Activated CD4-positive, alpha-beta T cell treated with anti-CD3 and anti-CD28 coated beads for 36 hours (primary cell): ENCODE measurements at regions of chr19 and their contacts with region 1.

Region 1: GRCh38 chr19:4342615-4343369 is 570 bp upstream of the MPND start:
- DNase-seq: peak; percentile 97
- ATAC-seq: peak; percentile 91
- H3K4me3 Mint-ChIP-seq: peak overlapping the region; percentile 89
- H3K27ac Mint-ChIP-seq: peak overlapping the region; percentile 93
- H3K4me1 Mint-ChIP-seq: peaks cover 17% of the 10 kb centered on the region
- H3K27me3 Mint-ChIP-seq: no peaks in the 10 kb centered on the region

Region 2: GRCh38 chr19:4007021-4007835 is 335.6 kb before region 1 on chr19 and contains the start of gene PIAS4:
- CTCF ChIA-PET with region 1: no interaction called
- POLR2A ChIA-PET with region 1: interaction called, 4 read pairs
- intact Hi-C with region 1: loop called in 1 of 2 experiments (anchors 1 kb)
- DNase-seq: peak; percentile 97
- ATAC-seq: peak; percentile 92
- H3K4me3 Mint-ChIP-seq: peak within 1 kb of the TSS; percentile 75
- H3K27ac Mint-ChIP-seq: peak within 1 kb of the TSS; percentile 71
- H3K4me1 Mint-ChIP-seq: peaks cover 27% of the 10 kb centered on the region
- H3K27me3 Mint-ChIP-seq: no peaks in the 10 kb centered on the region
- total RNA-seq, gene PIAS4: 23.0 to 37.3 TPM

Region 3: DNA sequence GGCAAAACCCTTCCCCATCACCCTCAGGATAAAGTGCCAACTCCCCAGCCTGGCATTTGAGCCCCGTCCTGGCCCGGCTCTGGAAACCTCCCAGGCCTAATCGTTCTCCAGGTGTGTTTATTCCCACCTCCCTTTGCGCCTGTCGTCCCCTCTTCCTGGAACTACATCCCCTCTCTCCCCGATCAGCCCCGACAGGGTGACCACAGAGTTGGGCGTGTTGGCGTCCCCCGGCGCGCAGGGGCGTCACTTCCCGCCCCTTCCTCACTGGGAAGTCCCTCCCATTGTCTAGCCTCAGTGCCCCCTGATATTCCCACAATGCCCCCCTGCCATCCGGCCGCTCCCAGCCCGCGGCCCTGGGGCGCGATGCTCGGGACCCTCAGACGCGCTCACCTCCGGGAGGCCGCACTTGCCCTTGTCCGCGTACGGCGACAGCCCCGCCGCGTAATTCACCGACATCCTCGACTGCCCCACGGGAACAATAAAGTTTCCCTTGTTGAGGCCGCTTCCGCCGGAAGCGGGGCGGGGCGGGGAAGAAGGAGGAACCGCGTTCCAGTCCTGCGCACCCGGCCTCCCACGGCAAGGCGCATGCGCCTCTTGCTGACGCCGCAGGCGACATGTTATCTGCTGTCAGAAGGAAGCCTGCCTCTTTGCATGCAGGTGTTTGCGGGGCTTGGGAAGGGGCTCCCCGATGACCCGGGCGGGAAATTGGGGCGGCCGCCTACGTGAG is 160.5 kb before region 1 on chr19 and contains the starts of genes ANKRD24 and SIRT6:
- CTCF ChIA-PET with region 1: no interaction called
- POLR2A ChIA-PET with region 1: no interaction called
- intact Hi-C with region 1: loop called in 1 of 2 experiments (anchors 1 kb)
- DNase-seq: peak; percentile 98
- ATAC-seq: peak; percentile 84
- H3K4me3 Mint-ChIP-seq: peak within 1 kb of the TSS; percentile 92
- H3K27ac Mint-ChIP-seq: peak within 1 kb of the TSS; percentile 93
- H3K4me1 Mint-ChIP-seq: peaks cover 30% of the 10 kb centered on the region
- H3K27me3 Mint-ChIP-seq: no peaks in the 10 kb centered on the region
- total RNA-seq, gene ANKRD24: 1.1 to 1.3 TPM
- total RNA-seq, gene SIRT6: 26.2 to 29.4 TPM

Region 4: GRCh38 chr19:4208385-4209094 is 134.3 kb before region 1 on chr19:
- CTCF ChIA-PET with region 1: no interaction called
- POLR2A ChIA-PET with region 1: no interaction called
- intact Hi-C with region 1: no loop called
- DNase-seq: no peak
- ATAC-seq: no peak
- H3K4me3 Mint-ChIP-seq: no peak overlapping the region
- H3K27ac Mint-ChIP-seq: no peak overlapping the region
- H3K4me1 Mint-ChIP-seq: no peaks in the 10 kb centered on the region
- H3K27me3 Mint-ChIP-seq: peaks cover 5% of the 10 kb centered on the region

Region 5: DNA sequence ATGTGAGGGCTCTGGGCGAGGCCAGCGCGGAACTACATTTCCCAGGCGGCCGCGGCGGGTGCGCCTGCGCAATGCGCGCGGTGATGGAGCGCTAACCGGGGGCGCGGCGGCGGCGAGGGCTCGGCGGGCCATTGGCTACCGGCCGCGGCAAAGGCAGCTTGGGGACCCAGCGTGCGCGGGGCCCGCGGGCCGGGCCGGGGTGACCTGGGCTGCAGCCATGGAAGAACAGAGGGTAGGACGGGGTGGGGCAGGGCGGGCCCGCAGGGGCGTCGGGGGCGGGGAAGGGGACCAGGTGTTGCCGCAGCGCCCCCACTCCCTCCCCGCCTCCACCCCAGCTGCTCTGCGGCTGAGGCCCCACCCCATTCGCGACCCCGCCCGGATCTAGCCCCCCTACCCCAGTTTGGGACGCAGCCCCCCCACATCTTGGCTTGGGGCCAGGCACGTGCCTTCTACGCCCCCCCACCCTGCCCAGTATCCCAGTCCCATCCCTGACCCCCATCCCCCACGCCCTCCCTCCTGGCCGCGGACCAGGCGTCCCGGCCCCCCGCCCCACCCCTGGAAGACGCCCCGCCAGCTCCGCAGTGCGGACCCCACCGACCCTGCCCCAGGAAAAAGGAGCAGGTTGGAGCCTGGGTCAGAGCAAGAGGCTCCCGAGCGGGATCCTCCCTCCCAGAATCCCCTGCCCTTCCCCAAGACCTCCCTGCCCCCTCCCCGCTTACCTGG is 38.1 kb before region 1 on chr19 and contains the start of gene FSD1:
- CTCF ChIA-PET with region 1: no interaction called
- POLR2A ChIA-PET with region 1: interaction called, 4 read pairs
- intact Hi-C with region 1: loop called in 1 of 2 experiments (anchors 1 kb)
- DNase-seq: peak; percentile 90
- ATAC-seq: peak; percentile 82
- H3K4me3 Mint-ChIP-seq: peak within 1 kb of the TSS; percentile 66
- H3K27ac Mint-ChIP-seq: peak within 1 kb of the TSS; percentile 72
- H3K4me1 Mint-ChIP-seq: peaks cover 34% of the 10 kb centered on the region
- H3K27me3 Mint-ChIP-seq: no peaks in the 10 kb centered on the region
- total RNA-seq, gene FSD1: 23.1 to 25.3 TPM

Region 6: GRCh38 chr19:4457654-4458395 is 115.0 kb after region 1 on chr19 and contains the start of gene UBXN6:
- CTCF ChIA-PET with region 1: no interaction called
- POLR2A ChIA-PET with region 1: no interaction called
- intact Hi-C with region 1: loop called in 1 of 2 experiments (anchors 1 kb)
- DNase-seq: peak; percentile 99
- ATAC-seq: peak; percentile 93
- H3K4me3 Mint-ChIP-seq: peak within 1 kb of the TSS; percentile 86
- H3K27ac Mint-ChIP-seq: peak within 1 kb of the TSS; percentile 86
- H3K4me1 Mint-ChIP-seq: peaks cover 19% of the 10 kb centered on the region
- H3K27me3 Mint-ChIP-seq: no peaks in the 10 kb centered on the region
- total RNA-seq, gene UBXN6: 32.9 to 38.4 TPM

Region 7: DNA sequence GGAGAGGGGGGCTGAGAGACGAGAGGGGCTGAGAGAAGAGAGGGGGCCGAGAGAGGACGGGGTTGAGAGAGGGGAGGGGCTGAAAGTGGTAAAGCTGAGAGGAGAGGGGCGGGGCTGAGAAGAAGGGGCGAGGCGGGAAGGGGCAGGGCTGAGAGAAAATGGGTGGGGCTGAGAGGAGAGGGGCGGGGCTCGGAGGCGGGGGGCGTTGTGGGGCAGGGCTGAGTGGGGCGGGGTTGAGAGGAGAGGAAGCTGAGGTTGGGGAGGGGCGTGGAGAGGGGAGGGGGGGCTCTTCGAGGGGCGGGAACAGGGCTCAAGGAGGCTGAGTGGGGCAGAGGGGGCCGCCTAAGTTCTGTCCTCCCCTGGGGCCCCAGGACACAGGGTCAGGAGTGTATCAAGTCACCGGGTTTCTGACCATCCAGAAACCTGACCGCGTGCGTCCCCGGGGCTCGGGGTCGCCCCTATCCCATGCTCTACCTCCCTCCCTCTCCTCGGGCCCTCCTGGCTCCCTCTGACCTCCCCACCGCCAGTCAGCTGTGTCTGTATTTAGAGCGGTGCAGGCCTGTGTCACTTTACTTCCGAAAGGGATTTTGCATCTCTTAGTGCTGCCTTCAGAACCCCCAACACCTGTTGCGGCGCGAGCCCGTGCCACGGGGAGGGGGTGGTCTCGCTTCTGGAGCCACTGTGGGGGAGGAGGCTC is 255.3 kb after region 1 on chr19:
- CTCF ChIA-PET with region 1: no interaction called
- POLR2A ChIA-PET with region 1: no interaction called
- intact Hi-C with region 1: no loop called
- DNase-seq: peak; percentile 77
- ATAC-seq: peak; percentile 77
- H3K4me3 Mint-ChIP-seq: no peak overlapping the region
- H3K27ac Mint-ChIP-seq: no peak overlapping the region
- H3K4me1 Mint-ChIP-seq: peaks cover 7% of the 10 kb centered on the region
- H3K27me3 Mint-ChIP-seq: peaks cover 41% of the 10 kb centered on the region

Region 8: GRCh38 chr19:5690125-5690954 is 1347.5 kb after region 1 on chr19 and contains the start of gene RPL36:
- CTCF ChIA-PET with region 1: no interaction called
- POLR2A ChIA-PET with region 1: no interaction called
- intact Hi-C with region 1: loop called in 1 of 2 experiments (anchors 10 kb)
- DNase-seq: peak; percentile 100
- ATAC-seq: peak; percentile 54
- H3K4me3 Mint-ChIP-seq: peak within 1 kb of the TSS; percentile 100
- H3K27ac Mint-ChIP-seq: peak within 1 kb of the TSS; percentile 96
- H3K4me1 Mint-ChIP-seq: peaks cover 21% of the 10 kb centered on the region
- H3K27me3 Mint-ChIP-seq: no peaks in the 10 kb centered on the region
- total RNA-seq, gene RPL36: 1,452 to 1,530 TPM